Testis (tissue), 5 donors: ENCODE measurements at regions of chr19 and their contacts with region 1.

Region 1: GRCh38 chr19:29154163-29154562 is 58.8 kb downstream of the UQCRFS1 start:
- DNase-seq: no peak
- H3K4me3 ChIP-seq: no peak overlapping the region
- H3K27ac ChIP-seq: no peak overlapping the region
- H3K4me1 ChIP-seq: no peaks in the 10 kb centered on the region
- H3K27me3 ChIP-seq: no peaks in the 10 kb centered on the region
- CTCF ChIP-seq: no peak
- POLR2A ChIP-seq: no peak

Region 2: DNA sequence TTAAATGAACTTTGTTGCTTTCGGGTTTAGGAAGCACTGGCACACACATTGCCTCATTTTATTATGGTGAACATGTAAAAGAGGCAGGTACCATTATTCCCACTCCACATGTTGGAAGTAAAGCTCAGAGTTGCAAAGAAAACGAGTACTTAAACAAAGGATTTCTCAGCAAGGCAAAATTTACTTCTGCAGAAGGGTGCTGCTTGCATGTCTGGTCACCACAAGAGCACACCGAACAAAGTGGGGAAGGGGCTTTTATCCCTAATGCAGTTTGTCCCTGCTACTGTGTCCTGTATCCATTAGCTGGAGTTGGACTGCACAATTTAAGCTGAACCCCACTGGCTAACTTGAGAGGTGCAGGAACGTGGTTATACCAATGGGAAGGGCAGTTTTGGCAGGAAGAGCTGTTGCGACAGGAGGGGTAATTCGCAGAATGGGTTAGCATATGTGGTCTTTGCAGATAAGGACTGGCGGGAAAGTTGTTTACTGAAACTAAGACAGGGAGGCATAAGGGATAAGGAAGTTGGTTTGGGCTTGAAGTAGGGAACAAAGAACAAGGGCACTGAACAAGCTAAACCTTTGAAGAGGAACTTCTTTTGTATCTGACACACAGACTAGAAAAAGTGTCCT is 486.7 kb before region 1 on chr19:
- intact Hi-C with region 1: loop called (anchors 10 kb)
- DNase-seq: no peak
- H3K4me3 ChIP-seq: no peak overlapping the region
- H3K27ac ChIP-seq: no peak overlapping the region
- H3K4me1 ChIP-seq: no peaks in the 10 kb centered on the region
- H3K27me3 ChIP-seq: no peaks in the 10 kb centered on the region
- CTCF ChIP-seq: no peak
- POLR2A ChIP-seq: no peak

Region 3: DNA sequence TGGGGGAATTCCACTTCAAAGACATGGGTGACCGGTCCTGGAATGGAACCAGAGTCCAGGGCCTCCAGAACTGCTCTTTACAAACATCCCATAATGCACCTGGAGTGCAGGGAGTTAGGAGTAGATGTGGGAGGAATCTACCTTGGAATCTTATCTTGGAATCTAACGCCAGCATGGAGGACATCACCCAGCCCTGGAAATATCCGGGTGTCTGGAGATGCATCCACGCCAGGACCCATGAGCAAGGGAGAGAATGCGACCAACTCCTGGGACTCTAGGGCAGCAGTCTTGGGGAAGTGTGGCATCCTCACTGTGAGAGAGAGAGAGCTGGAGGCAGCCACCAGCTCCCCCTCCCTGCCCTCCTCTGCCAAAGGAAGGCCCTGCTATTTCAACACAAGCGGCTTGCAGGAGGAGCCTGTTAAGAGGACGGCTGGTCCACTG is 153.0 kb before region 1 on chr19:
- intact Hi-C with region 1: no loop called
- DNase-seq: no peak
- H3K4me3 ChIP-seq: no peak overlapping the region
- H3K27ac ChIP-seq: no peak overlapping the region
- H3K4me1 ChIP-seq: peaks cover 9% of the 10 kb centered on the region
- H3K27me3 ChIP-seq: no peaks in the 10 kb centered on the region
- CTCF ChIP-seq: no peak
- POLR2A ChIP-seq: no peak

Region 4: GRCh38 chr19:29040951-29041350 is 113.2 kb before region 1 on chr19:
- intact Hi-C with region 1: no loop called
- DNase-seq: no peak
- H3K4me3 ChIP-seq: no peak overlapping the region
- H3K27ac ChIP-seq: no peak overlapping the region
- H3K4me1 ChIP-seq: no peaks in the 10 kb centered on the region
- H3K27me3 ChIP-seq: no peaks in the 10 kb centered on the region
- CTCF ChIP-seq: no peak
- POLR2A ChIP-seq: no peak

Region 5: DNA sequence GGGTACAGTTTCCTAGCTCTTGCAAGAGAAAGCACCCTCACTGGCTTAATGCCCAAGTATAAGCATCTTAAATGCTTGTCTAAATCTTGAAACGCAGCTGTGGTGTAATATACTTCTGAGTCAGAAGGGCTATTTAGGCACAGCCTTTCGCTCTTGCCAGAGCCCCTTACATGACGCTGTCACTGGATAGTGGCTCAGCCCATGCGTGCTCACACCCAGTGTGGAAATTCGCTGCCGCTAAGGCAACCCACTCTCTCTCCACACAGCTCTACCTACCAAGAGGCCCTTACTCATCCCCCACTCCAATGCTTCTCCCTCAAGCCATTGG is 34.8 kb after region 1 on chr19:
- intact Hi-C with region 1: no loop called
- DNase-seq: no peak
- H3K4me3 ChIP-seq: no peak overlapping the region
- H3K27ac ChIP-seq: no peak overlapping the region
- H3K4me1 ChIP-seq: no peaks in the 10 kb centered on the region
- H3K27me3 ChIP-seq: no peaks in the 10 kb centered on the region
- CTCF ChIP-seq: no peak
- POLR2A ChIP-seq: no peak